ENCODE measurements at regions of chr16 and their contacts with region 1.

Region 1: DNA sequence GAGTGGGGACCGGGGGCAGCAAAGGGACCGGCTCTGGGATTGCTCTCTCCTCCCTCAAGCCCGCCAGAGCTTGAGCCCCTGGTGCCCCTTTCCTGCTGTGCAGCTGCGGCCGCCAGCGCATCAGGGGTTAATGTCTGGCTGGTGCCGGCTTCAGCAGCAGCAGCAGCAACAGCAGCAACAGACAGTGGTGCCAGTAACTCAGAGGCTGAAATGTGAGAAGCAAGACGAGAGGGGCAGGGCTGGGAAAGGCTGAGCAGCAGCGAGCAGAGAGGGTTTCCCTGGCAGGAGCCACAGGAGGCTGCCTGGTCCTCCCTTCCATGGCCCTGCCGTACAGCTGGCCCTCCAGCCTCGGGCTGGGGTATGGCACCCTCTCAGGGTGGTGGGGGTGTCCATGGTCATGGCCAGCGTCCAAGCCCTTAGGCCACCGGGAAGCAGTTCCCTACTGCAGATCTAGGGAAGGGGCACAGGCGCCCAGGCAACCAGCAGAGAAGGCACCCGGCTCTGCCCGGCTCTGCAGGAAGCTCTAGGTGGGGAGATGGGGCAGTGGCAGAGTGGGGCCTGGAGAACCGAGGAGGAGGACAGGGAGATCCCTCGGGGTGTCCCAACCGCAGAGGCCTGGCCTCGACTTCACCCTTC is 21.1 kb upstream of the TFAP4 start:
- DNase-seq: peak; percentile 93
- H3K4me3 ChIP-seq: peak overlapping the region in 1 of 2 experiments; percentile 6; a peak in 2 of 4 replicates
- H3K27ac ChIP-seq: peak overlapping the region; percentile 60 to 87
- H3K4me1 ChIP-seq: peaks cover 10 to 20% of the 10 kb centered on the region in 2 experiments; a peak in 3 of 4 replicates
- H3K27me3 ChIP-seq: no peaks in the 10 kb centered on the region
- CTCF ChIP-seq: no peak
- EP300 ChIP-seq: peak in 1 of 2 experiments; percentile 73; a peak in 3 of 4 replicates
- RAD21 ChIP-seq: peak; percentile 17; the same call in 1 of the 2 replicates

Region 2: GRCh38 chr16:4176612-4177417 is 117.1 kb before region 1 on chr16:
- CTCF ChIA-PET with region 1: no interaction called
- POLR2A ChIA-PET with region 1: no interaction called
- DNase-seq: no peak
- H3K4me3 ChIP-seq: no peak overlapping the region
- H3K27ac ChIP-seq: no peak overlapping the region
- H3K4me1 ChIP-seq: peaks cover 0 to 4% of the 10 kb centered on the region in 2 experiments; a peak in 2 of 4 replicates
- H3K27me3 ChIP-seq: no peaks in the 10 kb centered on the region
- CTCF ChIP-seq: no peak
- EP300 ChIP-seq: no peak
- RAD21 ChIP-seq: no peak

Region 3: DNA sequence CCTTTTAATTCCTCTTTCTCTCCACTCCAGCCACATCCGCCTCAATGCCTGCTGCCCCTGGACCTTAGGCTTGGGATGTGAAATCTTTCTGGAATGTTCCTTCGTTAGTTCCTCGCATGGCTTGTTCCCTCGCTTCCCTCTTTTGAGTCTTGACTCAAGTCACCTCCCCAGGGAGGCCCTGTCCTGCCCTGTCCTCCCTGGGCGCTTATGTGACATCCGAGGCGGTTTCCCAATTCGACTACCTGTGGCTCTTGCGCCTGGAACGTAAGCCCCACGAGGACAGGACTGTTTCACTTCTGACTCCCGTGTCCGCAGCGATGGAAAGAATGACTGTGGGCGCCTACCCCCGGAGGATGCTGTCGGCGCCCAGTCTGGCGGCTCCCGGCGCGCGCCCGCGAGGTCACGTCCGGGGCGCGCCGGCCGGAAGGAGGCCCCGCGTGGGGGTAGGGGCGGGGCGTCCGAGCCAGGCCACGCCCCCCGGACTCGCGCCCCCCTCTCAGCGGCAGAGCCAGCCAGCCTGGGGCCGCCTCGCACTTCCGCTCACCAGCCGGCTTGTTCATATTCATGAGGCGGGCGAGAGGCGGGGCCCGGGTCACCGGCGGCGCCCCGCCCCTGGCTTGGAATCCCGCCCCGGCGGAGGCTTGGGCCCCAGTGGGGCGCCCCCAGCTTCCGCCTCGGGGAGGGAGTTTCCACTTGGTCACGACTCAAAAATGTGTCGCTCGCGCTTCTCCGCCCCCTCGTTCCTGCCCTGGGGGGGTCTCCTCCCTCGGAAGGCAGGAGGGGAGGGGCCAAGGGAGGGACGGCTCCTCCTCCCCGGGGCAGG is 13.5 kb after region 1 on chr16:
- CTCF ChIA-PET with region 1: interaction called, 5 read pairs
- POLR2A ChIA-PET with region 1: interaction called, 14 read pairs
- DNase-seq: peak; percentile 99
- H3K4me3 ChIP-seq: peak overlapping the region; percentile 52 to 56
- H3K27ac ChIP-seq: peak overlapping the region; percentile 39 to 77; a peak in 3 of 4 replicates
- H3K4me1 ChIP-seq: peaks cover 0 to 16% of the 10 kb centered on the region in 2 experiments; a peak in 1 of 4 replicates
- H3K27me3 ChIP-seq: no peaks in the 10 kb centered on the region
- CTCF ChIP-seq: no peak
- EP300 ChIP-seq: no peak
- RAD21 ChIP-seq: no peak

Region 4: GRCh38 chr16:4315186-4316109 is 21.5 kb after region 1 on chr16 and contains the start of gene GLIS2:
- CTCF ChIA-PET with region 1: interaction called, 14 read pairs
- POLR2A ChIA-PET with region 1: interaction called, 10 read pairs
- DNase-seq: peak; percentile 94
- H3K4me3 ChIP-seq: peak within 1 kb of the TSS; percentile 76 to 81
- H3K27ac ChIP-seq: peak within 1 kb of the TSS; percentile 78 to 84
- H3K4me1 ChIP-seq: peaks cover 13 to 41% of the 10 kb centered on the region in 2 experiments; a peak in 1 of 4 replicates
- H3K27me3 ChIP-seq: no peaks in the 10 kb centered on the region
- CTCF ChIP-seq: no peak
- EP300 ChIP-seq: no peak
- RAD21 ChIP-seq: no peak
- polyA plus RNA-seq, gene GLIS2: 3.3 and 6.5 TPM in 2 replicates

Measured in SK-N-SH (cell line).